ENCODE measurements at regions of chr3 and their contacts with region 1.

Region 1: GRCh38 chr3:193723091-193723490 is 130.1 kb downstream of the OPA1 start:
- DNase-seq: no peak
- ATAC-seq: no peak
- H3K4me3 ChIP-seq: no peak overlapping the region
- H3K27ac ChIP-seq: no peak overlapping the region
- H3K4me1 ChIP-seq: no peaks in the 10 kb centered on the region
- H3K27me3 ChIP-seq: no peaks in the 10 kb centered on the region; a peak in 1 of 4 replicates
- CTCF ChIP-seq: no peak
- EP300 ChIP-seq: no peak
- POLR2A ChIP-seq: no peak
- RAD21 ChIP-seq: no peak

Region 2: GRCh38 chr3:193297421-193297820 is 425.7 kb before region 1 on chr3:
- CTCF ChIA-PET with region 1: no interaction called
- POLR2A ChIA-PET with region 1: no interaction called
- RAD21 ChIA-PET with region 1: no interaction called
- SMC1A ChIA-PET with region 1: no interaction called
- in situ Hi-C with region 1: no loop called
- intact Hi-C with region 1: loop called (anchors 10 kb)
- DNase-seq: no peak
- ATAC-seq: peak; percentile 32
- H3K4me3 ChIP-seq: no peak overlapping the region
- H3K27ac ChIP-seq: no peak overlapping the region
- H3K4me1 ChIP-seq: no peaks in the 10 kb centered on the region
- H3K27me3 ChIP-seq: no peaks in the 10 kb centered on the region
- CTCF ChIP-seq: no peak
- EP300 ChIP-seq: no peak
- POLR2A ChIP-seq: no peak
- RAD21 ChIP-seq: no peak

Measured in GM12878 (cell line).